AG04450 (cell line): ENCODE measurements at regions of chr2 and their contacts with region 1.

Region 1: GRCh38 chr2:23363831-23364230 is 21.1 kb upstream of the KLHL29 start:
- DNase-seq: no peak
- H3K4me3 ChIP-seq: no peak overlapping the region
- H3K27ac ChIP-seq: no peak overlapping the region
- H3K27me3 ChIP-seq: peaks cover 10% of the 10 kb centered on the region
- CTCF ChIP-seq: no peak

Region 2: GRCh38 chr2:23351388-23352141 is 12.3 kb before region 1 on chr2:
- CTCF ChIA-PET with region 1: interaction called, 19 read pairs
- POLR2A ChIA-PET with region 1: no interaction called
- DNase-seq: peak; percentile 30
- H3K4me3 ChIP-seq: no peak overlapping the region; the same call in 1 of the 2 replicates
- H3K27ac ChIP-seq: no peak overlapping the region
- H3K27me3 ChIP-seq: peaks cover 9% of the 10 kb centered on the region
- CTCF ChIP-seq: peak; percentile 87

Region 3: DNA sequence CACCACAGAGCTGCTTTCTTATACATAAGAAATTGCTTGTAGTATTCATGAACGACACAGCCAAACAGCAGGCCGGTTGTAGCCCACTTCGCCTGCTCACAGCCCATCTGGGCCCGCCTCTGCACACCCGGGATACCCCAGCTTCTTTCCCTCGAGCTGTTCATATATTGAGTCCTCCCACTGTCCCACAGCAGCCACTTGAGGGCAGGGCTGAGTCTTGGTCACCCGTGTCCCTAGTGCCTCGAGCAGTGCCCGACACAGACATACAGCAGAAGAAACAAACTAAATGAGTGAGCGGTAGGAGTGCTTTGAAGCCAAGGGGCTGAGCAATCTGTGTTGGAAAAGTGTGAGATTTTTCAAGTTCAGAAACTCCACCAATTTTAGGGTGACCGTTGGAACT is 272.6 kb after region 1 on chr2:
- CTCF ChIA-PET with region 1: no interaction called
- POLR2A ChIA-PET with region 1: no interaction called
- DNase-seq: no peak
- H3K4me3 ChIP-seq: no peak overlapping the region
- H3K27ac ChIP-seq: peak overlapping the region; percentile 33
- H3K27me3 ChIP-seq: no peaks in the 10 kb centered on the region
- CTCF ChIP-seq: peak; percentile 26